ENCODE measurements at regions of chr1 and their contacts with region 1.

Region 1: DNA sequence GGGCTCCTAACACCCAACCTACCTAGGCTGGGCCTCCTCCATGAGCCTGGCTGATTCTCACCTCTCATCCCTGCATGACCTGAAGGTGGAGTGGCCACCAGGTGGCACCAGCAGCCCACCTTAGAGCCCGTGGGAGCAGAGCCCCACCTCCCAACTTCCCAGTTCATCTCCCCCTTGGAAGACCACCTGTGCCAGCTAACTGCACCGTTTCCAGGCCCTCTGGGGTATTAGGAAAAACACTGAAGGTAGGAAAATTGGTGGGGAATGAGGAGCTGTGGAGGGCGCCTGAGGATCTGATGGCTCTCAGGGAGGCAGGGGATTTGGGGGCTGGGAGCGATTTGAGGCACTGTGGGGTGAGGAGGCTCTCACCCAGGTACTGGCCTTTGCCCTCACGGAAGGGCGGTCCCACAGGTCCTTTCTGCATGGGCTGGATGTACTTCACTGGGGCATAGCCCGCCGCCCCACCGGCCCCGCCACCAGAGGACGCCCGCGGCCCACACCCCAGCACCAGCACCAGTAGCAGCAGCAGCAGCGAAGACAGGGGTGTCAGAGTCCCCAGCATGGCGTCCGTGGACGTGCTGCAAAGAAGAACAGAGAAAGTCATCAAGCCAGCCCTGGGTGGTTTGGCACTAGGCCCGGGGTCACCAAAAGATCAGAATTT is 11.1 kb downstream of the ADPRS start:
- DNase-seq: peak; percentile 92
- ATAC-seq: peak; percentile 76
- H3K4me3 Mint-ChIP-seq: no peak overlapping the region
- H3K27ac Mint-ChIP-seq: no peak overlapping the region
- H3K4me1 Mint-ChIP-seq: peaks cover 16% of the 10 kb centered on the region
- H3K27me3 Mint-ChIP-seq: no peaks in the 10 kb centered on the region
- CTCF ChIP-seq: peak; percentile 76

Region 2: GRCh38 chr1:36115200-36115669 is 15.4 kb after region 1 on chr1:
- CTCF ChIA-PET with region 1: interaction called, 23 read pairs
- POLR2A ChIA-PET with region 1: no interaction called
- DNase-seq: no peak
- ATAC-seq: no peak
- H3K4me3 Mint-ChIP-seq: no peak overlapping the region
- H3K27ac Mint-ChIP-seq: no peak overlapping the region
- H3K4me1 Mint-ChIP-seq: no peaks in the 10 kb centered on the region
- H3K27me3 Mint-ChIP-seq: no peaks in the 10 kb centered on the region
- CTCF ChIP-seq: no peak

Region 3: GRCh38 chr1:36134505-36135329 is 34.9 kb after region 1 on chr1:
- CTCF ChIA-PET with region 1: interaction called, 142 read pairs
- POLR2A ChIA-PET with region 1: interaction called, 6 read pairs
- DNase-seq: peak; percentile 81
- ATAC-seq: peak; percentile 95
- H3K4me3 Mint-ChIP-seq: no peak overlapping the region
- H3K27ac Mint-ChIP-seq: peak overlapping the region; percentile 26
- H3K4me1 Mint-ChIP-seq: peaks cover 6% of the 10 kb centered on the region
- H3K27me3 Mint-ChIP-seq: no peaks in the 10 kb centered on the region
- CTCF ChIP-seq: peak; percentile 80

Region 4: DNA sequence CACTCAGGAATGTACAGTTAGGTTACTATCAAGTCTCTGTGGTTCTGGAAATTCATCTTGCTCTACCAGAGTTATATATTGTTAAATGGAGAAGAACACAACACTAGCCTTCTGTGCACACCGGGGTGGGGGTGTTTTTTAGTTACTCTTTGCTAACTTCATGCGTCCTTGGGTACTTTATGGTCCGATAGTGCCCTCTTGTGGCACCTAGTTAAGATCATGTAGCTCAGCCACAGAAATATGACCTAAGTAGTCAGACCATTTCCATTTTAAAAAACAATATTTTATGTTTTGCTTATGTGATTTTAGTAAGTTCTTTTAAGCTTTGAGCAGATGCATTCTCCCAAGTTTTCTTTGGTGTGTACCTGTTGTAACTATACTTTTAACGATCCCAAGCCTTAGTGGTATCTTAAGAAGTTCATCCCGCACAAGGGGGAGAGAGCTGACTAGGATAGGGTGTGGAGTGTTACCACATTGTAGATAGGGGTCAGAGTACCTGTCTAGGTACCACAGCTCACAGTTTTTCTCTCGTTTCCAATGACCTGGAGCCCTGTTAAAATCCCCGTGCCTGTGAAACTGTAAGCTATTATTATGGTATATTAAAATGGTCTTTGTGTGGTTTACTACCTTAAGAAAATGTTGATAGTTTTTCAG is 185.8 kb after region 1 on chr1:
- CTCF ChIA-PET with region 1: interaction called, 22 read pairs
- POLR2A ChIA-PET with region 1: no interaction called
- DNase-seq: peak; percentile 44
- ATAC-seq: peak; percentile 71
- H3K4me3 Mint-ChIP-seq: no peak overlapping the region
- H3K27ac Mint-ChIP-seq: peak overlapping the region; percentile 57; the same call in 1 of the 2 replicates
- H3K4me1 Mint-ChIP-seq: no peaks in the 10 kb centered on the region
- H3K27me3 Mint-ChIP-seq: no peaks in the 10 kb centered on the region
- CTCF ChIP-seq: peak; percentile 55

Measured in WTC11 (cell line).